Activated T-helper 2 cell treated with anti-CD3 and anti-CD28 coated beads, Interferon-gamma antibody, Interleukin-2, Interleukin-4, amounts not matched to agents 10 μg/mL and 5 μg/mL and 100 μg/mL, durations not matched to agents 14 hours and 24 hours and 36 hours (primary cell): ENCODE measurements at regions of chr6 and their contacts with region 1.

Region 1: GRCh38 chr6:139881728-139882211 is 507.3 kb upstream of the CITED2 start:
- DNase-seq: no peak
- H3K4me3 Mint-ChIP-seq: no peak overlapping the region
- H3K27ac Mint-ChIP-seq: no peak overlapping the region
- H3K4me1 Mint-ChIP-seq: no peaks in the 10 kb centered on the region
- H3K27me3 Mint-ChIP-seq: peaks cover 2% of the 10 kb centered on the region

Region 2: DNA sequence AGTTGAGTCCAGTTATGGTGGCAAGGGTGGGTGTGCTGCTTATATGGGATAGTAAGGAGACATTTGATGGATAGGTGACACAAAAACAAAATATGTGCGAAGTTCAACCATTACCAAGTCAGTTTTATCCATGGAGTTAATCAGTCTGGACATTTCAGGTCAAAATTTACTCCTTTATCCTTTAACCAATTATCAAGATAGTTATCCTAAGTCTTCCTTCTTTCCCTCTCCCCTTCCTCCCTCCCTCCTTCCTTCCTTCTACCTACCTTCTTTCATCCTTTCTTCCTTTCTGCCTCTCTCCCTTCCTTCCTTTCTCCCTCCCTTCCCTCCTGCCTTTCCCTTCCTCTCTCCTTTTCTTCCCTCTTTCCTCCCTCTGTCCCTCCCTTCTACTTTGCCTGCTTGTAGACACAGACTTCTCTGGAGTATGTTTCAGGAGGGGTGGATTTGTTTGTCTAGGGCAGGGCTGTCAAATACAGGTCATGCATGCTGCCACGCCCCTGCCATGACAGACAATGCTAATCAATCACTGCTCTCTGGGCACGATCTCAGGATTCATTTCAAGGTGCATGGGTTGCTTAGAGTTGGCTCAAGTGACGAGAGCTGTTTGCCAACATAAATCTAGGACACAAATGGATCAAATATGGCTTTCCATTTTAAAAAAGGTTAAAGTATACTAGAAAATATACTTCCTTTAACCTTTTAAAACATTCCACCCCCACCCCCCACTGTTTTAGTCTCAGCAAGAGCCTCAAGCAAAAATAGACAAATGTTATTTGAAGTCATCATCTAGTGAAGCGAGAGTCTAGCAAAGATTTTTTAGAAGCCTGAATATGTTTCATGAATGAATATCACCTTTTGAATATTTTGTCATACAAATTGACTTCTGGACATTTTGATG is 225.7 kb before region 1 on chr6:
- intact Hi-C with region 1: no loop called
- DNase-seq: no peak
- H3K4me3 Mint-ChIP-seq: no peak overlapping the region
- H3K27ac Mint-ChIP-seq: no peak overlapping the region
- H3K4me1 Mint-ChIP-seq: no peaks in the 10 kb centered on the region
- H3K27me3 Mint-ChIP-seq: peaks cover 6% of the 10 kb centered on the region

Region 3: GRCh38 chr6:140052756-140053729 is 171.3 kb after region 1 on chr6:
- intact Hi-C with region 1: no loop called
- DNase-seq: no peak
- H3K4me3 Mint-ChIP-seq: no peak overlapping the region
- H3K27ac Mint-ChIP-seq: no peak overlapping the region
- H3K4me1 Mint-ChIP-seq: no peaks in the 10 kb centered on the region
- H3K27me3 Mint-ChIP-seq: no peaks in the 10 kb centered on the region

Region 4: DNA sequence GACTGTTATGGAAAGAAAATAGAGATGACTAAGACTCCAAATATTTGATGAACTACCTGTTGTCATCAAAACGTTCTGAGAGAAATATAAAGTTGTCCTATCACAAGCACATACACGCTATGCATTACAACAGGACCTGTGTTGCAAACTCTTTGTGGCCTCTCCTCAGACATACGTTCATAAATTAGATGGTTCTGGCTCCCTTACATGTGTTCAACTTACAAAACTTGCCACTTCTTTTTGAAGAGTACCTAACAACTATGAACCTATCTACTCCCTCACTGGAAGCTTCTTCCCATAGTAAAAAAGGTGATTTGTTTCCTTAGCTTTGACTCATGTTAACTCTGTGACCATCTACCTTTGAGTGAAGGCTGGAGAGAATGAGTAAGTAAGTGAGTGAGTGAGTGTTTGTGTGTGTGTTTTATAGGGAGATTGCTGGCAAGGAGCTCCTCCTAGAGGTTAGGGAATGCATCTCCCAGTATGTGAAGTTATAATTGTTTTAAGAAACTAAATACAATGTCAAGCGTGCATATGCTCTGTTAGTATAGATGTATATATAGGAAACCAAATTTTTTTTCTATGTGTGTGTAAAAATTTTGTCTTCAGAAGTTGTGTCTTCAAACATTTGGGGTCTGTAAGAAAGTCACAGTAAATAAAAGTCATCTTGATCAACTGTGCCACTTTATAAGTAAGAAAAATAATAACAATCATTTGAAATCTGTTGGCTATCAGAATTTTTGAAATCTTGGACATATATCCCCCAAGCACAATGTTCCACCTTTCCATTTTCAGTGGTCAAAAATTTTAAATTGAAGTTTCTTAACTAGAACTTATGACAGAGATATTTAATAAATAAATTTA is 1039.8 kb after region 1 on chr6:
- intact Hi-C with region 1: loop called (anchors 5 kb)
- DNase-seq: no peak
- H3K4me3 Mint-ChIP-seq: no peak overlapping the region
- H3K27ac Mint-ChIP-seq: no peak overlapping the region
- H3K4me1 Mint-ChIP-seq: no peaks in the 10 kb centered on the region
- H3K27me3 Mint-ChIP-seq: no peaks in the 10 kb centered on the region